Posterior vena cava (tissue), 2 donors: ENCODE measurements at regions of chr3 and their contacts with region 1.

Region 1: GRCh38 chr3:120532969-120533368 is 63.2 kb upstream of the NDUFB4 start:
- DNase-seq: no peak

Region 2: DNA sequence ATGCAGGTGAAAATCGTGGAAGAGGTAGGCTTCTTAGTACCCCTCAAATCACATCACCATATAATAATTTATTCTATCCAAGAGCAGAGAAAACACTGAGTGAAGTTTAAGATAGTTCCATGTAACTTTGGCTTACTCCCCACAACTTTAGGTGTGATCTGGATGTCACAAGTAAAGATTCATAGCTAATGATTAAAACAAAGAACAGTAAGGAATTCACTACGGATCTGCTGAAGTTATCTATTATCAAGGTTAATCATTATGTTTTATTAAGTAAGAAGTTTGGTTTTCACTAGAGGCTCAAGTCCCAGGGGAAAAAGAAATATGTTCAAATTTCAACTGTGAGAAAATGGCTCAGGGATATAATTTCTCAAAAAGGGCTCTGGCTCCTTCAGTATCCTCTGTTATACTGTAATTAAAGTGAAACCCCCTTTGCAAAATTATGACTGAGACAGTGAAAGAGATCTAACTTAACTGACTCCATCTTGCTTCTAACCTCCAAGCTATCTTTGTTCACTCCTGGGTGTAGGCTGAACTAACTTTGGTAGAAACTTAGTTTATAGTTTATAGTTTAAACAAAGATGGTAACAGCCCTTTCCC is 990.7 kb before region 1 on chr3:
- intact Hi-C with region 1: loop called in 1 of 2 experiments (anchors 5 kb)
- DNase-seq: no peak

Region 3: GRCh38 chr3:120299403-120299802 is 233.6 kb before region 1 on chr3:
- intact Hi-C with region 1: no loop called
- DNase-seq: no peak

Region 4: DNA sequence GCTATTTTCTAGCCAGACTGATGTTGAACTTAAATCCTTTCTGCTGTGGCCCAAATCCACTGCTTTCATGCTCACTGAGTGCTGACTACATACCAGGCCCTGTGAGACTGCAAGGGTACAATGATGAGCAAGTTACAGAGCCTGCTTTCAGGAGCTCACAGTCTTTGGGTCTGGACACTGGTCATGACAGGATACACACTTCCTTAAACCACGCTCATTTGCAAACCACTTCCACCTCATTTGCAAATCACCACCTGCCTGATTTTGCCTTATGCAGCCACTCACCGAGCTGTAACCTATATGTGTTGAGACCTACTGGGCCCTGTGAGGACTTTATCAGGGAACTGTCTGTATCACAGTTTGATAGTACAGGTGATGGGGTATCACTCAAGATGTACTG is 133.6 kb before region 1 on chr3:
- intact Hi-C with region 1: no loop called
- DNase-seq: no peak